Calu3 (cell line): ENCODE measurements at regions of chr17 and their contacts with region 1.

Region 1: GRCh38 chr17:75012346-75013091 is at the start of gene MRPL58:
- DNase-seq: peak; percentile 91
- H3K4me3 Mint-ChIP-seq: peak within 1 kb of the TSS; percentile 97
- H3K27ac Mint-ChIP-seq: peak within 1 kb of the TSS; percentile 74
- H3K4me1 Mint-ChIP-seq: peaks cover 40% of the 10 kb centered on the region
- H3K27me3 Mint-ChIP-seq: no peaks in the 10 kb centered on the region
- CTCF ChIP-seq: peak; percentile 64
- total RNA-seq, gene MRPL58: 49.0 and 52.7 TPM in 2 replicates

Region 2: DNA sequence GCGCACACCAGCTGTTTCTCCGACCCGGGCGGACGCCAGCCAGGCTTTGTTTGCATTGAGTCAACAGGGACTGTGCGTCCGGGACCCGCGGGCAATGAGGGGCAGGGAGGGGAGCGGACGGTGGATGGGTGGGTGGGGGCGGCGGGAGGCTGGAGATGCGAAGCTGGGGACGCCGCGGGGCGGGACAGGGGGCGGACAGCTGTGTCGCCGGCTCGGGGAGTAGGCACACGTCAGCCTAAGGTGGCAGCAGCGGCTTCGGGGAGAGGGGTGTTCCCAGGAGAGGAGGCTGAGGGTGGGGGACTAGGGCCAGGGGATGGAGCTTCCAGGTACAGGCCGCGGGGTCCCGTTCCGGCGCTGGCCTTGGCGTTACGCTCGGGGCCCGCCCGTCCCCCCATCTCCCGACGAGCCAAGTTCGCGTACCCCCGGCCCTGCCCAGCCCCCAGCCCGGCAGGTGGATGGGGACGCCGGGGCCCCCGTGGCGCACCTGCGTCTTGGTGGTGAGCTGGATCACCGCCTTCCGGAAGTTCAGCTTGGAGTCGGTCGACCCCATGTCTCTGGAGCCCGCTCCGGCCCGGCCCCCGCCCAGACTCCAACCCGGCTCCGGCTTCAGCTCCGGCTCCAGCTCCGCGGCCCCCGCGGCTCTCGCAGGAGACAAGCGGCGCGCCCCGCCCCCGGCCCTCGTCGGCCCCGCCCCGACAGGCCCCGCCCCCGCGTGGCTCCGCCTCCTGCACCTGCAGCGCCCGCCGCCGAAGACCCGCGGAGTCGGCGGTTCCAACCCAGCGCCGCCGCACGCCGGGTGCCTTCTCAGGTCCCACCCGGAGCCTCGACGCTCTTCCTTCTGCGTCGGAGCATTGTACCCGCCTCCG is 40.2 kb before region 1 on chr17 and contains the start of gene HID1:
- CTCF ChIA-PET with region 1: interaction called, 15 read pairs
- intact Hi-C with region 1: no loop called
- DNase-seq: peak; percentile 86
- H3K4me3 Mint-ChIP-seq: peak within 1 kb of the TSS; percentile 72
- H3K27ac Mint-ChIP-seq: peak within 1 kb of the TSS; percentile 76
- H3K4me1 Mint-ChIP-seq: peaks cover 38% of the 10 kb centered on the region
- H3K27me3 Mint-ChIP-seq: no peaks in the 10 kb centered on the region
- CTCF ChIP-seq: no peak
- total RNA-seq, gene HID1: 114 and 122 TPM in 2 replicates

Region 3: GRCh38 chr17:74987418-74987908 is 25.1 kb before region 1 on chr17 and contains the start of gene CDR2L:
- CTCF ChIA-PET with region 1: interaction called, 13 read pairs
- intact Hi-C with region 1: no loop called
- DNase-seq: peak; percentile 98
- H3K4me3 Mint-ChIP-seq: peak within 1 kb of the TSS; percentile 93
- H3K27ac Mint-ChIP-seq: peak within 1 kb of the TSS; percentile 58
- H3K4me1 Mint-ChIP-seq: peaks cover 56% of the 10 kb centered on the region
- H3K27me3 Mint-ChIP-seq: no peaks in the 10 kb centered on the region
- CTCF ChIP-seq: no peak
- total RNA-seq, gene CDR2L: 39.4 and 48.3 TPM in 2 replicates

Region 4: GRCh38 chr17:75034236-75034908 is 21.9 kb after region 1 on chr17:
- CTCF ChIA-PET with region 1: interaction called, 11 read pairs
- intact Hi-C with region 1: no loop called
- DNase-seq: peak; percentile 95
- H3K4me3 Mint-ChIP-seq: peak overlapping the region; percentile 97
- H3K27ac Mint-ChIP-seq: peak overlapping the region; percentile 100
- H3K4me1 Mint-ChIP-seq: peaks cover 30% of the 10 kb centered on the region
- H3K27me3 Mint-ChIP-seq: peaks cover 16% of the 10 kb centered on the region
- CTCF ChIP-seq: no peak

Region 5: DNA sequence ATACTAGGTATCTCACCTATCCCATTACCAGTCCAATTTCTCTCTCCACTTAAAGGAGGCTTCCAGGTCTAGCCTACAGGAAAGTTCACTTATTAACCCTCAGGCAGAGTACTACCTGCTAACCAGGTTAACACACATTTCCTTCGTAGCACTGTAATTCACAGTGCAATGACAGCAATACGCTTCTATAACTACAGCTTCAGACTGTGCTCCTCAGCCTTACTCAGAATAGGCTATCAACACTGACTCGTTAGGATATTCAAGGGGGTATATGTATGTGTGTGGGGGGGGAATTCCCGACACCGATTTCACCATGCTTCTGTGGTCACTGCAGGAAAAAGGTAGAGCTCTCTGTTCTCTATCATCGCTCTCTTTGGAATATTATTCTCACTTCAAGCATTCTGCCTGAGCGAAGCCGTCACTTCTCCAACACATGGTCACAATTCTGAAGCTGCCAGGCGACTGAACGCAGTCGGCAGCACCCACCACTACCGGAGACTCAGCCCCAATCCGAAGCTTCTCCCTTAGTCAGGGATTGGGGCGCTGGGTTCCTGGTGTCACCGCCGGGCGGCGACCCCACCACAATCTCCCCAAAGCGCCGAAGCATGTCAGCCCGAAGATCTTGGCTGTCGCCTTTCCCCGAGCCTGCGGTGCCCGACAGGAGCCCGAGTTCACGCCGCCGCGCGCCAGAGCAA is 248.3 kb after region 1 on chr17:
- CTCF ChIA-PET with region 1: no interaction called
- intact Hi-C with region 1: no loop called
- DNase-seq: no peak
- H3K4me3 Mint-ChIP-seq: peak overlapping the region; percentile 99
- H3K27ac Mint-ChIP-seq: peak overlapping the region; percentile 100
- H3K4me1 Mint-ChIP-seq: peaks cover 39% of the 10 kb centered on the region
- H3K27me3 Mint-ChIP-seq: no peaks in the 10 kb centered on the region
- CTCF ChIP-seq: no peak